PC-3 (cell line): ENCODE measurements at regions of chr5 and their contacts with region 1.

Region 1: DNA sequence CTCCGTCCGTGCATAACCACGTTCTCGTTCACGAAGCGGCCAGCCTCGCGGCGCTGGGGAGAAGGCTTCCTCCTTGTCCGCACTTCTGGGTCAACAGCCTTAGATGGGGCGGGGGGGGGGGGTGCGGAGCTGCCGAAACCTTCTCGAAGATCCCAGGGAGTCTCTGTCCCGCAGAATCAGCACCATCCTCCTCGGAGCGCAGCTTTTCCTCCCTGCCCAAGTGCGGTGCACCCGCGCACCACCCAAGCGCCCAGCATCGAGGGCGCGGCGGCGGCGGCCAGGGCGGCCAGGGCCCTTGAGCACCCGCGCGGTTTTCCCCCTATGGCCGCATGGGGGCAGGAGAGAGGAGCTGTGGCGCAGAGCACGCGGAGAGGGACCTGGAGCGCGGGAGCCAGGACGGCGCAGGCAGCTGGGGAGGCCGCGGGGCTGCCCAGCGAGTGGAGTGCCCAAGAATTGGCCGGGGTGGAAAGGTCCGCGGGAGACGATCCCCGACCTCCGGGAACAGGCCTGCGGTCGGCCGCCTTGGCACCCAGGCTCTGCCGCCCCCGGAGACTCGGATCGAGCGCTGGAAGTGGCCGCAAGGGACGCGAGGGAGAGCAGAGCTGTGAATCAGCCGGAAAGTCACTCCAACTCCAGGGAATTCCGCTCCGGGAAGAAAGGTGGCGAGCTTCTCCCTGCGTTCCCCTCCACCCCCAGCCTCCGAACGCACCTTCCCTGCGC is 43.1 kb downstream of the TMEM174 start:
- DNase-seq: peak; percentile 77
- ATAC-seq: peak; percentile 94
- H3K4me3 ChIP-seq: peak overlapping the region; percentile 68
- H3K27ac ChIP-seq: peak overlapping the region; percentile 68
- H3K4me1 ChIP-seq: no peaks in the 10 kb centered on the region
- H3K27me3 ChIP-seq: no peaks in the 10 kb centered on the region
- CTCF ChIP-seq: peak; percentile 70

Region 2: GRCh38 chr5:71663570-71663969 is 1552.5 kb before region 1 on chr5:
- CTCF ChIA-PET with region 1: no interaction called
- POLR2A ChIA-PET with region 1: no interaction called
- intact Hi-C with region 1: no loop called
- DNase-seq: no peak
- ATAC-seq: no peak
- H3K4me3 ChIP-seq: no peak overlapping the region
- H3K27ac ChIP-seq: no peak overlapping the region
- H3K4me1 ChIP-seq: no peaks in the 10 kb centered on the region
- H3K27me3 ChIP-seq: no peaks in the 10 kb centered on the region
- CTCF ChIP-seq: no peak

Region 3: GRCh38 chr5:73188764-73189531 is 27.1 kb before region 1 on chr5:
- CTCF ChIA-PET with region 1: no interaction called
- POLR2A ChIA-PET with region 1: no interaction called
- intact Hi-C with region 1: no loop called
- DNase-seq: no peak
- ATAC-seq: no peak
- H3K4me3 ChIP-seq: no peak overlapping the region
- H3K27ac ChIP-seq: no peak overlapping the region
- H3K4me1 ChIP-seq: no peaks in the 10 kb centered on the region
- H3K27me3 ChIP-seq: no peaks in the 10 kb centered on the region
- CTCF ChIP-seq: no peak

Region 4: DNA sequence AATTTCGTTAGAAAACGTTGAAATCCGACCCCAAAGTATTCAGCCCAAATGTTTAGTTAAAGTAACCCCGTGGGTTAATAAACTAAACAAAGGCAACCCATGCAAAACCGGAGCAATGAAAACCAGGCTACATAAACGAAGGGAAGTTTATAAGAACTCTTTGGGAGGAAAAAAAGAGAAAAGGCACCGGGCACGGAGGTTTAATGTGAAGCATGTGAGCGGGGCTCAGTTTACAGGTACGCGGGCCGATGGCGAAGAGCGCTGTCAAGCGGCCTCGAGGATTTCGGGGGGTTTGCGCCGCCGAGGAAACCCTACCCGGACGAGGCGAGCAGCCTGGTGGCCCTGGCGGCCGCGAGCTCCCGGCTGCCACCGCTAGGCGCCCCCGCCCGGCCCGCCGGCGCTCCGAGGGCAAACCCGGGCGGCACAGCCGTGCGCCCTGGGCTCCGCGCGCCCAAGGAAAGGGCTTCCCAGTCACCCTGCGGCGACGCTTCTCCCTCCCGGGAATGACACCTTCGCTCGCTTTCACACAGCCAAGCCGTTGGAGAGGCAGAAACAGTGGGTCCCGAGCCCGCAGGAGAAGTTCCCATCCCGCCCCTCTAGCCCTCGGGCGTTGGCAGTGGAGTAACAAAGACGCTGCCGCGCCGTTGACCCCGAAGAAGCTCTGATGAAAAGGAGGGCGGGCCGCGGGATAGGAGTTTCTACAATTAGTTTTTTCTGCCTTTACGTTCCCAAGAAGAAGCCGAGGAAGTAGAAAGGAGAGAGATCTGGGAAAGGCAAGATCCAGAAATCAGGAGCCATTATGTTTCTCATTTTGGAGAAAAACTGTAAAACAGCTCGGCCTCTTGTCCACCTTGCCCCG is 83.0 kb after region 1 on chr5:
- CTCF ChIA-PET with region 1: no interaction called
- POLR2A ChIA-PET with region 1: interaction called, 4 read pairs
- intact Hi-C with region 1: loop called (anchors 5 kb)
- DNase-seq: peak; percentile 52
- ATAC-seq: peak; percentile 88
- H3K4me3 ChIP-seq: peak overlapping the region; percentile 69
- H3K27ac ChIP-seq: no peak overlapping the region
- H3K4me1 ChIP-seq: peaks cover 12% of the 10 kb centered on the region
- H3K27me3 ChIP-seq: no peaks in the 10 kb centered on the region
- CTCF ChIP-seq: peak; percentile 44; the same call in 1 of the 2 replicates

Region 5: GRCh38 chr5:73365301-73365853 is 149.3 kb after region 1 on chr5:
- CTCF ChIA-PET with region 1: interaction called, 16 read pairs
- POLR2A ChIA-PET with region 1: no interaction called
- intact Hi-C with region 1: loop called (anchors 2 kb)
- DNase-seq: peak; percentile 88
- ATAC-seq: peak; percentile 86
- H3K4me3 ChIP-seq: no peak overlapping the region
- H3K27ac ChIP-seq: peak overlapping the region; percentile 96
- H3K4me1 ChIP-seq: peaks cover 41% of the 10 kb centered on the region
- H3K27me3 ChIP-seq: no peaks in the 10 kb centered on the region
- CTCF ChIP-seq: no peak

Region 6: GRCh38 chr5:73448463-73449136 is 232.5 kb after region 1 on chr5 and contains the start of gene FOXD1:
- CTCF ChIA-PET with region 1: interaction called, 16 read pairs
- POLR2A ChIA-PET with region 1: interaction called, 3 read pairs
- intact Hi-C with region 1: loop called (anchors 1 kb)
- DNase-seq: peak; percentile 83
- ATAC-seq: peak; percentile 83
- H3K4me3 ChIP-seq: peak within 1 kb of the TSS; percentile 78
- H3K27ac ChIP-seq: peak within 1 kb of the TSS; percentile 40
- H3K4me1 ChIP-seq: peaks cover 12% of the 10 kb centered on the region
- H3K27me3 ChIP-seq: no peaks in the 10 kb centered on the region
- CTCF ChIP-seq: no peak
- total RNA-seq, gene FOXD1: 10.3 and 12.8 TPM in 2 replicates